GM18951 (cell line): ENCODE measurements at regions of chr10 and their contacts with region 1.

Region 1: DNA sequence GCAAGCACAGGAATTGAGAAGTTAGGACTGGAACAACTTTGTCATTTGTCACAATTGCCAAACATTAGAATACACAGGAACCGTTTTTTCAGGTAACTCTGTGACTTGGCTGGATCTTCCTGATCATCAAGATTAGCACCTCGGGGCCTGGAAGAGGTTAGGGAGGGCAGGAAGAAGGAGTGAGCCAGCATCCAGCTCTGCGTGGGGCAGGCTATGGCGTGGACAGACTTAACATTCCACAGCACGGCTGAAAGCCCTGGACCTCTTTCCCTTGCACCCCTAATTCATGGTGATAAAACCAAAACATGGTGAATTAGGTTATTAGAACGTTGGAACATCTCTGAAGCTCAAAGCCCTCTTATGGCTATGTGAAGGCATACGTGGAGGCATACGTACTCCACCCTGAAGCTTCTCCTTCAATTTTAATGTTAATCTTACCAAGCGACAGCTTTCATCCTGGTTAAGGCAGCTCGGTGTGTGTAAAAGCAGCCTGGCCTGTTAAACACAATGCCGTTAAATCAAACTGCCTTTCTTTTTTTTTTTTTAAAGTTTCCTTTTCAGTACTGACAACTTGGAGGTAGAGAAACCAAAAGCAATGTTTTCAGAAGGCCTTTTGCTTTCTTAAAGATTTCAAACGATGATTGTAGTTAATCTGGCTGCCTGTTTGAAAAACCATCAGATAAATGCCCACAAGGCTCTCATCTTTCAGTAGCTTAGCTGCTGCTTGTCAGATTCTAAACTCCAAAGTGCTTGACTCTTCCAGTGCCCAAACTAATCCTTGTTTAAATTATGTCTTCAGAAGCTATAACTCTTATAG is 4.5 kb downstream of the GRK5 start:
- POLR2A ChIP-seq: no peak

Region 2: DNA sequence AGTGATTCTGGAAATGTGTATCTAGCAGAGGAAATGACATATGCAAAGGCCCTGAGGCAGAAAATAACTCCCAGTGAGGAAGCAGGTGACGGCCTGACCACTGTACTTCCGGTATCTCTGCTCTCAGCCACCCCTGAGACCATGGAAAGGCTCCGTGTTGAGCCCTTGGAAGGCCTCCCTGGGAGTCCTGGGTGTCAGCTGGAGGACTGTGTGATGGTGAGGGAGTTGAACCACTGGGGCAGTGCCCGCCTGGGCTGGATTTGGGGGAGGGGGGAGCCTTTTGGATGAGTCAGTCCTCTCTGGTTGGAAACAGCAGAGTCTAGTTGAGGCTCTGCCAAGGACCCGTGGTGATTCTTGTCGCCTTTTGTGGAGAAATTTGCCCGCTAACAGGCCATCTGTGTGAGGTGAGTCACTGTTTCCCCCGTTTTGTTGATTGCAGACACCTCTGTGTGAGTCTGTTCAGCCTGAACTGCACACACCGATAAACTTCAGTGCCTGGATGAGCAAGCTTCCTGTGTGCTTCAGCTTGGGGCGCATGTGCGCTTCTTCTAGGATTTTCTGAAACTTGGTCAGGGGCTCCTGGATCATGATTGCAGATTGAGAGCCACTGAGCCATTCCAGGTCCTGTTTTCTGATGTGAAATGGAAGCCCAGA is 94.2 kb after region 1 on chr10:
- in situ Hi-C with region 1: loop called (anchors 10 kb)
- POLR2A ChIP-seq: peak; percentile 67